Aorta (tissue), 5 donors: ENCODE measurements at regions of chr15 and their contacts with region 1.

Region 1: DNA sequence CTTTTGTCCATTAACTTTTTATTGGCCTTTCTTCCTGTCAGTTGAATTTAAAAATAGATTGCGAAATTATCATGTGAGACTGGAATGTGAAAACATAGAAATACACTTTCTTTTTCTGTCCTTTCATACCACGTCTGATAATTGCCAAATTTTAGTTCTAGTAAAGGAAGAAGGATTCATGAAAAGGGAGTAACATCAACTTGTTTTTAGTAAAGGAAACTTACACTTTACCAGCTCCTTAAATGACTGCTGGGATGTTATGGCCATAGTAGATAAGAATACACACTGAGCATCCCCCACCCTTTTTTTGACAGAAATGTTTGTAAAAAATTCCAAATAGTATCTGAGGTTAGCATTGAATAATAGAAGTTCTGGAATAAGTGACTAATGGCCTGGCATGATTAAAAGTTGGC is 137.9 kb downstream of the NEO1 start:
- DNase-seq: no peak
- ATAC-seq: no peak
- H3K4me3 ChIP-seq: no peak overlapping the region
- H3K27ac ChIP-seq: no peak overlapping the region
- H3K4me1 ChIP-seq: peaks cover 2 to 6% of the 10 kb centered on the region in 2 donors
- H3K27me3 ChIP-seq: no peaks in the 10 kb centered on the region

Region 2: GRCh38 chr15:72873379-72874233 is 316.6 kb before region 1 on chr15:
- intact Hi-C with region 1: no loop called
- DNase-seq: no peak
- ATAC-seq: no peak
- H3K4me3 ChIP-seq: no peak overlapping the region
- H3K27ac ChIP-seq: no peak overlapping the region
- H3K4me1 ChIP-seq: peaks cover 0 to 4% of the 10 kb centered on the region in 2 donors
- H3K27me3 ChIP-seq: no peaks in the 10 kb centered on the region

Region 3: GRCh38 chr15:73212424-73212823 is 22.2 kb after region 1 on chr15:
- intact Hi-C with region 1: loop called in 1 of 2 experiments (anchors 1 kb)
- DNase-seq: no peak
- ATAC-seq: no peak
- H3K4me3 ChIP-seq: no peak overlapping the region
- H3K27ac ChIP-seq: peak overlapping the region in 1 of 2 donors; percentile 43
- H3K4me1 ChIP-seq: no peaks in the 10 kb centered on the region
- H3K27me3 ChIP-seq: no peaks in the 10 kb centered on the region